OCI-LY7 (cell line): ENCODE measurements at regions of chr11 and their contacts with region 1.

Region 1: GRCh38 chr11:43852057-43852636 is 28.5 kb upstream of the ALKBH3 start:
- DNase-seq: peak; percentile 72
- H3K4me3 ChIP-seq: no peak overlapping the region
- H3K27ac ChIP-seq: no peak overlapping the region
- H3K4me1 ChIP-seq: no peaks in the 10 kb centered on the region
- CTCF ChIP-seq: peak; percentile 97

Region 2: GRCh38 chr11:43504316-43504950 is 347.7 kb before region 1 on chr11:
- CTCF ChIA-PET with region 1: no interaction called
- POLR2A ChIA-PET with region 1: no interaction called
- intact Hi-C with region 1: loop called (anchors 5 kb)
- DNase-seq: peak; percentile 4
- H3K4me3 ChIP-seq: no peak overlapping the region
- H3K27ac ChIP-seq: no peak overlapping the region
- H3K4me1 ChIP-seq: no peaks in the 10 kb centered on the region
- CTCF ChIP-seq: 0 out of 2 replicates have a peak, but pooled peaks have one; percentile 20

Region 3: GRCh38 chr11:43567396-43567975 is 284.7 kb before region 1 on chr11:
- CTCF ChIA-PET with region 1: no interaction called
- POLR2A ChIA-PET with region 1: no interaction called
- intact Hi-C with region 1: loop called (anchors 5 kb)
- DNase-seq: peak; percentile 61
- H3K4me3 ChIP-seq: no peak overlapping the region
- H3K27ac ChIP-seq: no peak overlapping the region
- H3K4me1 ChIP-seq: no peaks in the 10 kb centered on the region
- CTCF ChIP-seq: peak; percentile 88

Region 4: DNA sequence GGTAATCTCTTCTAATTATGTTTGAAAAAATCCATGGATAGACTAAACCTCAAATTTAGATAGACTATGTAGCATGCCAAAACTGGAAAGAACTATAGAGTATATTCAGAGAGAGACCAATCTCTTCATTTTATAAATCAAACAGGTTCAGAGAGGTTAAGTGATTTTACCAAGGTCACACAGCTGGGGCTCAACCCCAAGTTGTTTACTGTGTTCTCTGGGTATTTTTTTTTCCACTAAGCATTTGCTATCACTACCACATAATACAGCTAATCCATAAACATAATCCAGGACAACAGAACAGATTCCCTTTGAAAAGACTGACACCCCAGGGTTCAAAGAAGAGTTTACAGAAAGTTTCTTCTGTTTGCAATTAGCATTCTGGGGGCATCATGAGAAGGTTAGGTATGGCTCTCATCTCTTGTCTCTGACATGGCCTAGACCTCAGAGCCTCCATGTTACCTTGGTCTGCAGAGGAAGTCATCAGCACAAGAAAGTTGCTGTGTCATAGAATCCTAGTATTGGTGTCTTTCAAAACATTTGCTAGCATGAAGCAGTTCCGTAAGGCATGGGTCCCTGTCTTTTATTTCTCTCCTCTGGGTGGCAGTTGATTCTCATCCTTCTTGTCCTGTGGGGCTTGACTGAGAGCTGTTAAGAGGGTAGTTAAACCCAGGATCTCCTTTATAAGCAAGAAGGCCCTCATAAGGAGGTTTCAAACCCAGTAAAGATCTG is 266.1 kb before region 1 on chr11:
- CTCF ChIA-PET with region 1: no interaction called
- POLR2A ChIA-PET with region 1: no interaction called
- intact Hi-C with region 1: loop called (anchors 5 kb)
- DNase-seq: no peak
- H3K4me3 ChIP-seq: no peak overlapping the region
- H3K27ac ChIP-seq: no peak overlapping the region
- H3K4me1 ChIP-seq: peaks cover under 1% of the 10 kb centered on the region
- CTCF ChIP-seq: peak; percentile 30; the same call in 1 of the 2 replicates

Region 5: DNA sequence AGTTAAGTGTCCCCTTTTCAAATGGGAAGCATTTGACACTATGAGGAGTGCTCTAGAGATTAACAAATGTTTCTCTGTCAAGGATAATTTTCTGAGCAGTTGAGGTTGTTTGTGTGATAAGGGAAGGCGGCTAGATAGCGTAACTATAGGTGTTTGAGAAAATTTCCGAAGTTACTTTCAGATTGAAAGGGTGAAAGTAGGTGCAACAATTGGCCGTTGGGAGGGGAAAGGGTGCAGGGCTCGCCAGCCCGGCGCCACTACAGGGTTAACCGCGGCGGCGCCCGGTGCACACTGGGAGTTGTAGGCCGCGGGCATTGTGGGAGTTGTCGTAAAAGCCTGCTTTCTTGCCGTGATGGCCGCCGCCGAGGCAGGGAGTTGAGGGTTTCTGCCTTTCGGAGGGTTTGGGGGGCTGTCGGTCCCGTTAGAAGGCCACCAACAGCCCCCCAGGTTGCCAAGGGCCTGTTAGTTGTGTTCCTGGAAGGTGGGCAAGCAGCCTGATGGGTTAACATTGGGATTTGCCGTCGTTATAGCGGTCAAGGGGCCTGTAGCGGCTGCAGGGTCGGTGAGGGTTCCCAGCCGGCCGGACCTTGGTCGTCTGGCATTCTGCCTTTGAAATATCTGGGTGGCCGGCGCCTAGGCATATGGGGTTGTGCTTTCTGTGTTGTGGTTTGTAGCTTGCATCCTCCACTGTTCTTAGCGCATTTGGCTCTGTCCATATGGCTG is 208.1 kb before region 1 on chr11:
- CTCF ChIA-PET with region 1: interaction called, 3 read pairs
- POLR2A ChIA-PET with region 1: no interaction called
- intact Hi-C with region 1: loop called (anchors 5 kb)
- DNase-seq: peak; percentile 92
- H3K4me3 ChIP-seq: peak overlapping the region; percentile 94
- H3K27ac ChIP-seq: no peak overlapping the region
- H3K4me1 ChIP-seq: peaks cover 7% of the 10 kb centered on the region
- CTCF ChIP-seq: no peak

Region 6: GRCh38 chr11:44361813-44362212 is 509.7 kb after region 1 on chr11:
- CTCF ChIA-PET with region 1: interaction called, 10 read pairs
- POLR2A ChIA-PET with region 1: no interaction called
- intact Hi-C with region 1: no loop called
- DNase-seq: no peak
- H3K4me3 ChIP-seq: no peak overlapping the region
- H3K27ac ChIP-seq: no peak overlapping the region
- H3K4me1 ChIP-seq: no peaks in the 10 kb centered on the region
- CTCF ChIP-seq: no peak